Sigmoid colon (tissue), 7 donors: ENCODE measurements at regions of chr19 and their contacts with region 1.

Region 1: GRCh38 chr19:46860125-46860845 is 512 bp upstream of the ARHGAP35 start:
- DNase-seq: peak; percentile 100
- H3K4me3 ChIP-seq: peak overlapping the region; percentile 49 to 99 (median 82)
- H3K27ac ChIP-seq: peak overlapping the region; percentile 95 to 99 (median 97)
- H3K4me1 ChIP-seq: peaks cover 0 to 61% (median 55%) of the 10 kb centered on the region in 4 donors
- H3K27me3 ChIP-seq: no peaks in the 10 kb centered on the region
- CTCF ChIP-seq: no peak
- EP300 ChIP-seq: no peak
- POLR2A ChIP-seq: peak; percentile 53 to 71

Region 2: DNA sequence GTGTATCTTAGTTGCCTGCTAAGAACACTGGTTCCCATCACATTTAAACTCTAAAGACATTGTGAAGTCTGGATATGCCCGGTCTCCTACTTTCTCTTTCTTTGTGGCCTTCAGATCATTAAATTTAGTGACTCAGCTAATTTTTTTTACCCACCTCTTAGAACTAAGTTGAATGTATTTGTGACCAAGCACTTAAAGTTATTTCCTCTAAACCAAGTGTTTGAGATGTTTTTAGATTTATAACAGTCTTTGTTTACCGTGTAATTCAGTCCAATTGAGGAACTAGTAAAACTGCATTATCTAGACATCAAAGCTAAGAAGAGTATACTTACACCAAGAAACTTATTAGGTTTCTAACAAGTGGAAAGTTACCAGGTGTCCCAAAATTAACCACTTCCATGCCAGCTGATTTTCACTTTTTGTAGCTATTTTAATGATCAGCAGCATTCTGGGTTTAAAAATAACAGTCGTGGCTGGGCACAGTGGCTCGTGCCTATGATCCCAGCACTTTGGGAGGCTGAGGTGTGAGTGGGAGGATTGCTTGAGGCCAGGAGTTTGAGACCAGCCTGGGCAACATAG is 53.7 kb after region 1 on chr19:
- intact Hi-C with region 1: loop called (anchors 5 kb)
- DNase-seq: no peak
- H3K4me3 ChIP-seq: peak overlapping the region in 1 of 4 donors; percentile 3
- H3K27ac ChIP-seq: peak overlapping the region; percentile 18 to 75 (median 64)
- H3K4me1 ChIP-seq: peaks cover 0 to 66% (median 49%) of the 10 kb centered on the region in 4 donors
- H3K27me3 ChIP-seq: no peaks in the 10 kb centered on the region
- CTCF ChIP-seq: no peak
- EP300 ChIP-seq: no peak
- POLR2A ChIP-seq: no peak

Region 3: DNA sequence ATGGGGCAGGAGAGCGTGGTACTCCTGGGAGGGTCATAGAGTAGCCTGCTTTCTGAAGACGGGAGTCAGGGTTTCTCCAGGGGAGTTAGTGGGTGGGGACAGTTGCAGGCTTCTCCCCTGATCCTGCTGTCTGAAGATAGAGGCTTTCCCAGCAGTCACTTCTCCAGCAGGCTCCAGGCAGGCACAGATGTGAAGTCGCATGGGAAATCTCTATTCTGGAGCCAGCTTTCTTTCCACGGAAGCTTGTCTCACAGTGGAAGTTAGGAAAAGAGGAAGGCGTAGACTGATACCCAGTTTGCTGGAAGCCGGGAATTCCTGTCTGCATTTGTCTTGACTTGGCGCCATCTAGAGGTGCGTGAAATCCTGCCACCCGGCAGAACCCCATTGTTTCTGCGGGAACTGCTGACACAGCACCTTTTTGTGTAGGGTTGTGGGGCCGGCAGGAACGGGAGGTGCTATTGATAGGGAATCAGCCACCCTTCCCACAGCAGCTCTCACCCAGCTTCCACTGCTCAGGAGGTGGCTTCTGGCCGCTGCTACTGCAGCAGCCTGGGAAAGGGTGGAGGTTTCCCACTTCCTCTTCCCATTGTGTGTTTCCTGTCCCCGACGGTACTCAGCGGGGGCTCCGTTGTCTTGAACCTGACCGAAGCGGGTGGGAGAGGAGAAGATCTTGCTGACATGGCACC is 130.8 kb after region 1 on chr19:
- intact Hi-C with region 1: loop called (anchors 1 kb)
- DNase-seq: peak; percentile 93
- H3K4me3 ChIP-seq: no peak overlapping the region
- H3K27ac ChIP-seq: peak overlapping the region; percentile 51 to 64 (median 58)
- H3K4me1 ChIP-seq: peaks cover 0 to 17% (median 12%) of the 10 kb centered on the region in 4 donors
- H3K27me3 ChIP-seq: no peaks in the 10 kb centered on the region
- CTCF ChIP-seq: peak; percentile 66 to 88 (median 75)
- EP300 ChIP-seq: no peak
- POLR2A ChIP-seq: no peak

Region 4: DNA sequence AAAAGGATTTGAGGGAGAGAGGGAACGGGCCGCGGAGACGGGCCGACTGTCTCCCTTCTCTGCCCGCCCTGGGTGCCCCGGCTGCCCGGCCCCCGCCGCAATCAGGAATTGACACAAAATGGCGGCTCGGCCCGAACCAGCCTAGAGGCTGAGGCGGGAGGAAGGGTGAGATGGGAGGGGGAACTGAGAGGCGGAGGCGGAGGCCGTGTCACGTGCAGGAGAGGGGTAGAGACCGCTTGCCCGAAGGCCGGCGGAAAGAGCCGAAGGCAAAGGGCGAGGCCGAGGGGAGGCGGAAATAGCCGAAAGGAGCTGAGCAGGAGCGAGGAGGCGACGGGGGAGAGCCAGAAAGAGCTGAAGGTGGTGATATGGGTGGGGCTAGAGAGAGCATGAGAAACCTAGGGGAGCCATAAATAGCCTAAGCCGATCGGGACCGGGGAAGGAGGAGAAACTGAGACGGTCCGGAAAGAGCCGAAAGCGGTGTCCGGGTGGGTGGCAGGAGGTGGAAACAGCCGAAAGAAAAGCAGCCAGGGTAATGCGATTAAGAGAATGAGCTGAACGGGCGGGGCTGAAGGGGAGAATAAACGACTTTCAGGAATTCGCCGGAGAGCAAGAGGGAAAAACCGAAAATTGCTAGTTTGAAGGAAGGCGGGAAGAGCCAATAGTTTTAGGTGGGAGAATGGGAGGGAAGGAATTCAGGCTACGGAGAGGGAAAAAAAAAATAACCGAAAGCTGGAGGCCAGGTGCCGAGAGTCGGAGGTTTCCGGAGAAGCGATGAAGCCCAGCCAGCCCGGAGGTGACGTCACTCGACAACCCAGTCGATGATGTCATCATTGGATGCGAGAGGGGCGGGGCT is 252.9 kb after region 1 on chr19 and contains the start of gene ZC3H4:
- intact Hi-C with region 1: loop called (anchors 5 kb)
- DNase-seq: peak; percentile 100
- H3K4me3 ChIP-seq: peak within 1 kb of the TSS; percentile 78 to 98 (median 97)
- H3K27ac ChIP-seq: peak within 1 kb of the TSS; percentile 97 to 100 (median 100)
- H3K4me1 ChIP-seq: peaks cover 0 to 28% (median 27%) of the 10 kb centered on the region in 4 donors
- H3K27me3 ChIP-seq: no peaks in the 10 kb centered on the region
- CTCF ChIP-seq: no peak
- EP300 ChIP-seq: peak in 1 of 4 donors; percentile 73
- POLR2A ChIP-seq: peak; percentile 69 to 74
- total RNA-seq, gene ZC3H4: 19.3 to 25.3 (median 21.8) TPM